CD4-positive, alpha-beta T cell (primary cell): ENCODE measurements at regions of chr16 and their contacts with region 1.

Region 1: DNA sequence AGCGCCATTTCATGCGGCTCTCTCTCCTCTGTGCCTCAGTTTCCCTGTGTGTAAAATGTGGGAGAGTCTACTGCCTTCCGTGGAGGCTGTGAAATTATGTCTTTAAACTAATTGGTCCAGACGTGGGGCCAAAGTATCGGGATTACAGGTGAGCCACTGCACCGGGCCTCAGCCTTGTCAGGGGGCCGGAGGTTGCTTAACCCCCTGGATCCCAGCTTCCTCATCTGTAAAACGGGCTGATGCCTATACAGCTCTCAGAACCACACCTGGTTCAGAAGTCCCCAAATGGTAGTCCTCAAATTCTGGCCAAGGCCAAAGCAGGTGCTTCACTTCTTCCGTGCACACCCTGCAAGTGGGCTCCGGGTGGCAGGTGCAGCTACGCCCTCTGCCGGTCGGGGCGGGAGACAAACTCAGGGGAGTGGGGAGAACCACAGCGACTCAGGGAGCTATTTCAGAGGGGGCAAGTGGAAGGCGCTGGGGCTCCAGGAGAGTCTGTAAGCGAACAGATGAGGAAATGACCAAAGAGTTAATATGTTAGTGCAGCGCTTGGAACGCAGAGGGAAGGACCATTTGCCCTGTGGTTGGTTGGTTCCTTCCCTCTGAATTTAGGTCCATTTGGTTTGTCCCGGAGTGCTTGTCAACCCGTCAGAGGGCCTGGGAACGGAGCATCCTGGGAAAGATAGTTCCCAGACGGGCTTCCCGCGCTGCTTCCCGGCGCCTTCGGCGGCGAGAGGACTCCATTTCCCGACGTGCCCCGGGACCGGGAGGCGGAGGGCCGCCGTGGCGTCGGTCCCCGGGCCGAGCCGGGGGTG is at the start of gene MGRN1:
- DNase-seq: peak; percentile 85 to 97 (median 90)
- ATAC-seq: peak; percentile 94
- H3K4me3 ChIP-seq: peak within 1 kb of the TSS; percentile 85
- H3K4me3 Mint-ChIP-seq: peak within 1 kb of the TSS; percentile 95
- H3K27ac ChIP-seq: peak within 1 kb of the TSS; percentile 72 to 94
- H3K27ac Mint-ChIP-seq: peak within 1 kb of the TSS; percentile 98
- H3K4me1 ChIP-seq: peaks cover 29% of the 10 kb centered on the region
- H3K4me1 Mint-ChIP-seq: peaks cover 33% of the 10 kb centered on the region
- H3K27me3 ChIP-seq: no peaks in the 10 kb centered on the region
- H3K27me3 Mint-ChIP-seq: no peaks in the 10 kb centered on the region
- CTCF ChIP-seq: peak; percentile 98
- total RNA-seq, gene MGRN1: 45.9 to 48.6 TPM

Region 2: DNA sequence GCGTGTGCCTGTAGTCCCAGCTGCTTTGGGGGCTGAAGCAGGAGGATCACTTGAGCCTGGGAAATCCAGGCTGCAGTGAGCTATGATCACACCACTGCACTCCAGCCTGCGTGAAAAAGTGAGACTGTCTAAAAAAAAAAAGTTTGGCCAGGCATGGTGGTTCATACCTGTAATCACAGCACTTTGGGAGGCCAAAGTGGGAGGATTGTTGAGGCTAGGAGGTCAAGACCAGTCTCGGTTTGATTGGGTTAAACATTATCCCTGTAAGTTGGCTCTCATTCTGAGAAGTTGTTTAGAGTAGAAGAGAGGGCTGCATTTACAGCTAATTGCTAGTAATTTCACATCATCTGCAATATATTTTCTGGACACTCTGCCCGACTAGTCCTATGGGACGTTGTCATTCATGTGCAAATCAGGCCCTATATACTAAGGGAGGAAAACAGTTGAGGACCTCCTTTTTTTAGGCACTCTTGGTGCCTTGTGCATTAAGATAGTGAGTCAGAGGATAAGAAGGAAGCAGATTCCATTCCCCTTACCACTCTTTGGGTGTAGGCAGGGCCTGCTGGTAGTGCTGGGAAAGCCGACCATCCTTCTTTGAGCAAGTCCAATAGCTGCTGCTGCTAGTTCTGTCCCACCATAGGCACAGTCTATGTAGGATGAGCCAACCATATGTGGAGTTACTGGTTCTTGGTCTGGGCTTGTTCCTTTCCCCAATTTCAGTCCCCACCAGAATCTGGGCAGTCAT is 129.3 kb before region 1 on chr16:
- CTCF ChIA-PET with region 1: no interaction called
- POLR2A ChIA-PET with region 1: no interaction called
- intact Hi-C with region 1: no loop called
- DNase-seq: no peak
- ATAC-seq: no peak
- H3K4me3 ChIP-seq: no peak overlapping the region
- H3K4me3 Mint-ChIP-seq: no peak overlapping the region
- H3K27ac ChIP-seq: no peak overlapping the region
- H3K27ac Mint-ChIP-seq: peak overlapping the region; percentile 87
- H3K4me1 ChIP-seq: peaks cover 82% of the 10 kb centered on the region
- H3K4me1 Mint-ChIP-seq: peaks cover 88% of the 10 kb centered on the region
- H3K27me3 ChIP-seq: no peaks in the 10 kb centered on the region
- H3K27me3 Mint-ChIP-seq: no peaks in the 10 kb centered on the region
- CTCF ChIP-seq: no peak

Region 3: DNA sequence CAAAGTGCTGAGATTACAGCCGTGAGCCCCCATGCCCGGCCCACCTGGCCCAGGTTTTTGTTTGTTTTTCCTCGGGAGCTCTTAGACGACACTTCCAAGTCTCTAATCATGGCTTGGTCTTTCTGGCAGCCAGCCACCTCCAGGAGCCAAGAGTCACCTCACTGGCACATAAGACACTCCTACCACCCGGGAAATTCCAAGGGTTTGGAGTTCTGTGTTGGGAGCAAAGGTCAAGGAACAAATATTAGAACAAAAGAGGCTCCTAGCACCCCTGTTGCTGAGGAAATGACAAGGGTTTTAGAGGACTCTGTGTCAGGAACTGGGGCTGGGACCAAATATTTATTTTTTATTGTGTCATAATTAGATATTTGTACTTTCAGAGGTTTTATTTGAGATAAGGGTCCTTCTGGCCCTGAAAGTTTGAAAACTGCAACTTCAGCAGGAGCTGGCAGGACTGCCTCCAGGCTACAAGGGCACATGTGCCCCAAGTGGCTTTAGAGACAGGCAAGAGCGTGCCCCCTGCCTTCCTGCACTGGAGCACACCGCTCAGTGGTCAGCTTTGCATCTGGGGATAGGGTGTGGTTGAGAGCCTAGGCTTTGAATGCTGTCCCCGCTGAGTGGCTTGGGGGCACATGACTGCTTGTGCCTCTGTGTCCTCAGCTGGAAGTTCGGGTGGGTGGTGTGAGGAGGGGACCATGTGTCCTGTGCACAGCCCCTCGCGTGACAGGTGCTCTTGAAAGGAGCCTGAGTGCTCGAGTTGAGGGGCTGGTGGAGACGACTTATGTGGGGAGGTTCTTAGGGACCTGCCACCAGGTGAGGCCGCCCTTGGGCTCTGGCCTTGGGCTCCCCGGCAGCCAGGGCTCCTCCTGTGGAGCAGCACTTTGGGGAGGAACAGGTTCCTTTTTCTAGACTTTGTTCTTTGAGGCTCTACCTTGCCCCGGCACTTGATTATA is 30.1 kb after region 1 on chr16:
- CTCF ChIA-PET with region 1: interaction called, 10 read pairs
- POLR2A ChIA-PET with region 1: interaction called, 15 read pairs
- intact Hi-C with region 1: loop called (anchors 2 to 5 kb)
- DNase-seq: no peak
- ATAC-seq: no peak
- H3K4me3 ChIP-seq: no peak overlapping the region
- H3K4me3 Mint-ChIP-seq: peak overlapping the region; percentile 11
- H3K27ac ChIP-seq: no peak overlapping the region
- H3K27ac Mint-ChIP-seq: no peak overlapping the region
- H3K4me1 ChIP-seq: peaks cover 30% of the 10 kb centered on the region
- H3K4me1 Mint-ChIP-seq: peaks cover 24% of the 10 kb centered on the region
- H3K27me3 ChIP-seq: no peaks in the 10 kb centered on the region
- H3K27me3 Mint-ChIP-seq: no peaks in the 10 kb centered on the region
- CTCF ChIP-seq: no peak

Region 4: DNA sequence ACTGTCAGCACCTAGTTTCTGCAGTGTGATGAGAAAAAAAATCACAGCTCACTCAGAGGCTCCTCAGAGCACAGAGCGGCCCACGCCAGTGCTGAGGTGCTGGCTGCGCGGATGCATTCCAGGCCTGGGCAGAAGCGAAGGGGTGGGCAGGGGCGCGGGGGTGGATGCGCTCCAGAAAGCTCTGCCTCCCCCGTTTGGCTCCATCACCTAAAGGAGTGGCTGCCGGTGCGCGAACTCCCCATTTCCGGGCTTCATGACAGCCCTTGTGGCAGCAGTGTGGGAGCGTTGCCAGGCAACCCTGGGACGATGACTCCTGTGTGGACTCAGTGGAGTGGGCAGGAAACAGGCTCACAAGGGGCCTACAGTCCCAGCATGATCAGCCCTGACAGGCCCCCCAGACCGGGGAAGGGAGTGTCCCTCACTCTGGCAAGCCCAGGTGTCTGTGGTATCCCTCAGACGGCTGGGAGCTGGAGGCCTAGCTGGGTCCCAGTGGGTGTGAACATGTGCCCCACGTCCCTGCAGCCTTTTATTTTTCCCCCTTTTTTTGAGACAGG is 36.3 kb after region 1 on chr16:
- CTCF ChIA-PET with region 1: interaction called, 7 read pairs
- POLR2A ChIA-PET with region 1: interaction called, 15 read pairs
- intact Hi-C with region 1: no loop called
- DNase-seq: peak; percentile 29 to 91 (median 59)
- ATAC-seq: peak; percentile 65
- H3K4me3 ChIP-seq: peak overlapping the region; percentile 9
- H3K4me3 Mint-ChIP-seq: peak overlapping the region; percentile 50
- H3K27ac ChIP-seq: peak overlapping the region; percentile 43 to 76
- H3K27ac Mint-ChIP-seq: peak overlapping the region; percentile 95
- H3K4me1 ChIP-seq: peaks cover 68% of the 10 kb centered on the region
- H3K4me1 Mint-ChIP-seq: peaks cover 65% of the 10 kb centered on the region
- H3K27me3 ChIP-seq: no peaks in the 10 kb centered on the region
- H3K27me3 Mint-ChIP-seq: no peaks in the 10 kb centered on the region
- CTCF ChIP-seq: no peak

Region 5: GRCh38 chr16:4766874-4767628 is 142.8 kb after region 1 on chr16 and contains the start of gene ZNF500:
- CTCF ChIA-PET with region 1: no interaction called
- POLR2A ChIA-PET with region 1: no interaction called
- intact Hi-C with region 1: loop called in 1 of 2 experiments (anchors 2 kb)
- DNase-seq: peak; percentile 90 to 99 (median 96)
- ATAC-seq: peak; percentile 90
- H3K4me3 ChIP-seq: peak within 1 kb of the TSS; percentile 80
- H3K4me3 Mint-ChIP-seq: peak within 1 kb of the TSS; percentile 96
- H3K27ac ChIP-seq: peak within 1 kb of the TSS; percentile 52 to 69
- H3K27ac Mint-ChIP-seq: peak within 1 kb of the TSS; percentile 90
- H3K4me1 ChIP-seq: peaks cover 41% of the 10 kb centered on the region
- H3K4me1 Mint-ChIP-seq: peaks cover 32% of the 10 kb centered on the region
- H3K27me3 ChIP-seq: no peaks in the 10 kb centered on the region
- H3K27me3 Mint-ChIP-seq: no peaks in the 10 kb centered on the region
- CTCF ChIP-seq: no peak
- total RNA-seq, gene ZNF500: 11.8 to 12.4 TPM

Region 6: GRCh38 chr16:4900036-4900435 is 275.8 kb after region 1 on chr16:
- CTCF ChIA-PET with region 1: no interaction called
- POLR2A ChIA-PET with region 1: no interaction called
- intact Hi-C with region 1: no loop called
- DNase-seq: no peak
- ATAC-seq: no peak
- H3K4me3 ChIP-seq: no peak overlapping the region
- H3K4me3 Mint-ChIP-seq: no peak overlapping the region
- H3K27ac ChIP-seq: no peak overlapping the region
- H3K27ac Mint-ChIP-seq: no peak overlapping the region
- H3K4me1 ChIP-seq: no peaks in the 10 kb centered on the region
- H3K4me1 Mint-ChIP-seq: no peaks in the 10 kb centered on the region
- H3K27me3 ChIP-seq: peaks cover 0 to 5% of the 10 kb centered on the region in 2 experiments
- H3K27me3 Mint-ChIP-seq: peaks cover 18% of the 10 kb centered on the region
- CTCF ChIP-seq: no peak